ENCODE measurements at regions of chr13 and their contacts with region 1.

Region 1: DNA sequence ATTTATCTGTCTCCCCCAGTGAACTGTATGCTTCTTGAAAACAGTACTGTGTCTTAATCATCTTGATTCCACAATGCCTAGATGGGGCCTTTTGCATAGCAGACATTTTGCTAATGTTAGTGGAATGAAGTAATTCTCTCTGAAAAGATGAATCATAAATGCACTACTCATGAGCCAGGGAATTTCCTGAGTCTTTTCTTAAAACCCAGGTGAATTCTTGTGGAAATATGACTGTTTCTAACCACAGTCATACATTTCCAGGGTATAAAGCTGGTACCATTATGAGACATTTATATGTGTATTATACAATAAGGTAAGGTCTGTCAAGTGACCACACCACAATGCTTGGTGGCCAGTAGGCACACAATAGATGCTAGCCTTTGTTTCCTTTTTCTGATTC is 5.5 kb upstream of the KCTD4 start:
- DNase-seq: peak; percentile 35
- ATAC-seq: peak; percentile 94
- H3K4me3 Mint-ChIP-seq: no peak overlapping the region
- H3K27ac Mint-ChIP-seq: no peak overlapping the region
- H3K4me1 Mint-ChIP-seq: peaks cover 34% of the 10 kb centered on the region
- H3K27me3 Mint-ChIP-seq: no peaks in the 10 kb centered on the region

Region 2: GRCh38 chr13:45055198-45055901 is 151.0 kb before region 1 on chr13:
- CTCF ChIA-PET with region 1: no interaction called
- POLR2A ChIA-PET with region 1: no interaction called
- intact Hi-C with region 1: loop called (anchors 1 kb)
- DNase-seq: peak; percentile 83
- ATAC-seq: peak; percentile 99
- H3K4me3 Mint-ChIP-seq: no peak overlapping the region
- H3K27ac Mint-ChIP-seq: no peak overlapping the region
- H3K4me1 Mint-ChIP-seq: peaks cover 28% of the 10 kb centered on the region
- H3K27me3 Mint-ChIP-seq: peaks cover 38% of the 10 kb centered on the region

Region 3: GRCh38 chr13:45194081-45194939 is 12.0 kb before region 1 on chr13:
- CTCF ChIA-PET with region 1: interaction called, 20 read pairs
- POLR2A ChIA-PET with region 1: interaction called, 3 read pairs
- intact Hi-C with region 1: no loop called
- DNase-seq: no peak
- ATAC-seq: no peak
- H3K4me3 Mint-ChIP-seq: no peak overlapping the region
- H3K27ac Mint-ChIP-seq: no peak overlapping the region
- H3K4me1 Mint-ChIP-seq: peaks cover 6% of the 10 kb centered on the region
- H3K27me3 Mint-ChIP-seq: no peaks in the 10 kb centered on the region

Region 4: GRCh38 chr13:45320876-45321629 is 114.7 kb after region 1 on chr13:
- CTCF ChIA-PET with region 1: no interaction called
- POLR2A ChIA-PET with region 1: no interaction called
- intact Hi-C with region 1: loop called in 1 of 2 experiments (anchors 5 kb)
- DNase-seq: no peak
- ATAC-seq: no peak
- H3K4me3 Mint-ChIP-seq: no peak overlapping the region
- H3K27ac Mint-ChIP-seq: no peak overlapping the region
- H3K4me1 Mint-ChIP-seq: peaks cover 9% of the 10 kb centered on the region
- H3K27me3 Mint-ChIP-seq: no peaks in the 10 kb centered on the region

Region 5: DNA sequence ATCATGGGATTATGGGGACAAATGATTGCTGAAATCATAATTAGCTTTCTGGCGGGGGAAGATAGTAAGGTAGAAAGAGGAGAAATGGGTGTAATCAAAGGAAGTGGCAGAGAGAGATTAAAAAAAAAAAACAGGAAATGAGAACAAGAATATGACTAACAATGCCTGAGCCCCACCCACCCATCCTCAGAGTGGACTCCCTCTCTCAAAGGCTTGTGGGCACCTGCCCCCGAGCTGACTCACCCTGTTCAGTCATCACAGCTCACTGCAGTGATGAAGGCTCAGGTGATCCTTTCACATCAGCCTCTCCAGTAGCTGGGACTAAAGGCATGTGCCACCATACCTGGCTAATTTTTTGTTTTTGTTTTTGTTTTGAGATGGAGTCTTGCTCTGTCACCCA is 161.0 kb after region 1 on chr13:
- CTCF ChIA-PET with region 1: no interaction called
- POLR2A ChIA-PET with region 1: no interaction called
- intact Hi-C with region 1: loop called in 1 of 2 experiments (anchors 1 kb)
- DNase-seq: peak; percentile 96
- ATAC-seq: peak; percentile 100
- H3K4me3 Mint-ChIP-seq: peak overlapping the region; percentile 21
- H3K27ac Mint-ChIP-seq: peak overlapping the region; percentile 89
- H3K4me1 Mint-ChIP-seq: peaks cover 53% of the 10 kb centered on the region
- H3K27me3 Mint-ChIP-seq: no peaks in the 10 kb centered on the region